CD4-positive, alpha-beta memory T cell (primary cell): ENCODE measurements at regions of chr6 and their contacts with region 1.

Region 1: GRCh38 chr6:33200219-33201146 is at the starts of genes RXRB and SLC39A7:
- DNase-seq: peak; percentile 95 to 99 (median 98)
- H3K4me3 ChIP-seq: peak within 1 kb of the TSS; percentile 99
- H3K4me3 Mint-ChIP-seq: peak within 1 kb of the TSS; percentile 98 to 100 (median 99)
- H3K27ac ChIP-seq: peak within 1 kb of the TSS; percentile 88
- H3K27ac Mint-ChIP-seq: peak within 1 kb of the TSS; percentile 96 to 99 (median 98)
- H3K4me1 ChIP-seq: peaks cover 62% of the 10 kb centered on the region
- H3K4me1 Mint-ChIP-seq: peaks cover 45 to 82% (median 64%) of the 10 kb centered on the region in 4 donors
- H3K27me3 ChIP-seq: no peaks in the 10 kb centered on the region
- H3K27me3 Mint-ChIP-seq: no peaks in the 10 kb centered on the region
- total RNA-seq, gene RXRB: 89.2 to 94.3 TPM
- total RNA-seq, gene SLC39A7: 40.8 to 40.9 TPM

Region 2: GRCh38 chr6:31901953-31902643 is 1298.4 kb before region 1 on chr6 and contains the start of gene ZBTB12:
- CTCF ChIA-PET with region 1: no interaction called
- POLR2A ChIA-PET with region 1: no interaction called
- intact Hi-C with region 1: loop called (anchors 5 kb)
- DNase-seq: peak; percentile 83 to 87 (median 86)
- H3K4me3 ChIP-seq: peak within 1 kb of the TSS; percentile 49 to 78
- H3K4me3 Mint-ChIP-seq: peak within 1 kb of the TSS; percentile 78 to 92 (median 90)
- H3K27ac ChIP-seq: peak within 1 kb of the TSS; percentile 58
- H3K27ac Mint-ChIP-seq: peak within 1 kb of the TSS; percentile 71 to 95 (median 89)
- H3K4me1 ChIP-seq: peaks cover 30% of the 10 kb centered on the region
- H3K4me1 Mint-ChIP-seq: peaks cover 17 to 36% (median 27%) of the 10 kb centered on the region in 4 donors
- H3K27me3 ChIP-seq: no peaks in the 10 kb centered on the region
- H3K27me3 Mint-ChIP-seq: peaks cover 0 to 1% of the 10 kb centered on the region in 2 donors
- total RNA-seq, gene ZBTB12: 2.4 to 2.5 TPM

Region 3: GRCh38 chr6:33118525-33119123 is 81.9 kb before region 1 on chr6:
- CTCF ChIA-PET with region 1: interaction called, 4 read pairs
- POLR2A ChIA-PET with region 1: no interaction called
- intact Hi-C with region 1: loop called (anchors 2 kb)
- DNase-seq: peak in 4 of 5 donors; percentile 65 to 72 (median 69)
- H3K4me3 ChIP-seq: no peak overlapping the region
- H3K4me3 Mint-ChIP-seq: no peak overlapping the region
- H3K27ac ChIP-seq: no peak overlapping the region
- H3K27ac Mint-ChIP-seq: peak overlapping the region in 1 of 7 donors; percentile 26
- H3K4me1 ChIP-seq: no peaks in the 10 kb centered on the region
- H3K4me1 Mint-ChIP-seq: peaks cover 0 to 13% (median 5%) of the 10 kb centered on the region in 4 donors
- H3K27me3 ChIP-seq: peaks cover 13% of the 10 kb centered on the region
- H3K27me3 Mint-ChIP-seq: peaks cover 42 to 50% of the 10 kb centered on the region in 2 donors

Region 4: DNA sequence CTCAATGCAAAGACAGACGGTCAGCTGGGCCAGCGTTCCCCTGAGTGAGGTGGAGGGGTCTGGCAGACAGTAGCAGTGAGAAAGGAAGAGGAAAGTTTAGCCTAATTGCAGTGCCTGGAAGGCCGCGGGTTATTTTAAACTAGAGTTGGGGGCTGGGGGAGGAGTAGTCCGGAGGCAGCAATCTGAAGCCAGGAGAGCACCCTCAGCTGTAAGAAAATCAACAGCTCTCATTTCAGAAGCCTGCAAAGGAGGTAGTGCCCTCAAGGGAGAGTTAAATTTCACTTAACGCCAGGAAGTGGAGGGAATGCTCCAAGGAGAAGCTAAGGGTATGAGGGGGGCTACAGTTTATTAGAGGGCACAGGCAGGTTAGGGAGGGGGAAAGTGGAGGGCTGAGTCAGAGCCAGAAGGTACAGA is 34.7 kb after region 1 on chr6:
- CTCF ChIA-PET with region 1: no interaction called
- POLR2A ChIA-PET with region 1: no interaction called
- intact Hi-C with region 1: no loop called
- DNase-seq: no peak
- H3K4me3 ChIP-seq: no peak overlapping the region
- H3K4me3 Mint-ChIP-seq: no peak overlapping the region
- H3K27ac ChIP-seq: no peak overlapping the region
- H3K27ac Mint-ChIP-seq: no peak overlapping the region
- H3K4me1 ChIP-seq: no peaks in the 10 kb centered on the region
- H3K4me1 Mint-ChIP-seq: no peaks in the 10 kb centered on the region
- H3K27me3 ChIP-seq: no peaks in the 10 kb centered on the region
- H3K27me3 Mint-ChIP-seq: peaks cover 16 to 27% of the 10 kb centered on the region in 2 donors

Region 5: DNA sequence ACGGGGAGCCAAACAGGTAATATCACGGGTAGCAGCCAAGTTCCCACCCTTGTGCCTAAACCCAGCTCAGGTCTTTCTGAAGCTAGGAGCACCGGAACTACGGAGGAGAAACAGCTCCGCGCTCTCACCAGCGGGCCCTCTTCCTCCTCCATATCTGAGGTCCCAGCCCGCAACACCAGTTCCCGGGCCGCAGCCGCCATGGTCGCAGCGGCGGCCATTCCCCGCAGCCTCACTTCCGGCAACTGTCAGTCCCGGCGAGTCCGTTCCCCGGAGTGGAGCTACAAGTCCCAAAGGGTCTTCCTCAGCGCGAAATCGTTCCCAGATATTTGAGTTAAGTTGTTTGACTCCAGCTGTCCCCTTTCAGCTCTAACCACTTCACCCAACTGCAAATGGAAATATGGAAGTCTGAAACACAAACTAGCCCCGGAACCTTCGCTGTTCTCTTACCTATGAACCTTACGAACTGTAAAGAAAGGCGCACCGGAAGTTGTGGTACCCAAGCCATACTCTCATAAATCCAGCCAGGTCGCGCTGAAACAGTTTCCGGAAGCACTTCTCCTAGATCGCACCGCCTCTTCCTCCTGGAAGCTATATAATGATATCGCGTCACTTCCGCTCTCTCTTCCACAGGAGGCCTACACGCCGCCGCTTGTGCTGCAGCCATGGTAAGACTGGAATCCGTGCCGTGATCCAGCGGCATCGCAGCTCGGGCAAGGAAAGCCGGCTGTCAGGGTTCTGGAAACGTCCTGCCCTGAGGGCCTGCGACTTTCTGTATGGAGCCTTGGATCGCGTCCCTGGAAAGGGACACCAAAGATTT is 71.2 kb after region 1 on chr6 and contains the starts of genes RPS18 and VPS52:
- CTCF ChIA-PET with region 1: no interaction called
- POLR2A ChIA-PET with region 1: interaction called, 8 read pairs
- intact Hi-C with region 1: loop called (anchors 1 kb)
- DNase-seq: peak; percentile 95 to 98 (median 96)
- H3K4me3 ChIP-seq: peak within 1 kb of the TSS; percentile 75 to 90
- H3K4me3 Mint-ChIP-seq: peak within 1 kb of the TSS; percentile 96 to 100 (median 98)
- H3K27ac ChIP-seq: peak within 1 kb of the TSS; percentile 85
- H3K27ac Mint-ChIP-seq: peak within 1 kb of the TSS; percentile 97 to 100 (median 99)
- H3K4me1 ChIP-seq: peaks cover 62% of the 10 kb centered on the region
- H3K4me1 Mint-ChIP-seq: peaks cover 43 to 78% (median 61%) of the 10 kb centered on the region in 4 donors
- H3K27me3 ChIP-seq: no peaks in the 10 kb centered on the region
- H3K27me3 Mint-ChIP-seq: no peaks in the 10 kb centered on the region
- total RNA-seq, gene RPS18: 3,264 to 3,439 TPM
- total RNA-seq, gene VPS52: 89.4 to 95.7 TPM

Region 6: GRCh38 chr6:33323623-33323948 is 123.1 kb after region 1 on chr6:
- CTCF ChIA-PET with region 1: no interaction called
- POLR2A ChIA-PET with region 1: no interaction called
- intact Hi-C with region 1: loop called (anchors 1 kb)
- DNase-seq: no peak
- H3K4me3 ChIP-seq: peak overlapping the region; percentile 53 to 68
- H3K4me3 Mint-ChIP-seq: peak overlapping the region; percentile 94 to 100 (median 98)
- H3K27ac ChIP-seq: peak overlapping the region; percentile 88
- H3K27ac Mint-ChIP-seq: peak overlapping the region; percentile 89 to 100 (median 96)
- H3K4me1 ChIP-seq: peaks cover 47% of the 10 kb centered on the region
- H3K4me1 Mint-ChIP-seq: peaks cover 32 to 59% (median 46%) of the 10 kb centered on the region in 4 donors
- H3K27me3 ChIP-seq: no peaks in the 10 kb centered on the region
- H3K27me3 Mint-ChIP-seq: no peaks in the 10 kb centered on the region

Region 7: GRCh38 chr6:33579828-33580714 is 379.6 kb after region 1 on chr6 and contains the start of gene BAK1:
- CTCF ChIA-PET with region 1: no interaction called
- POLR2A ChIA-PET with region 1: interaction called, 3 read pairs
- intact Hi-C with region 1: loop called (anchors 10 kb)
- DNase-seq: peak; percentile 78 to 89 (median 79)
- H3K4me3 ChIP-seq: peak within 1 kb of the TSS; percentile 88 to 98
- H3K4me3 Mint-ChIP-seq: peak within 1 kb of the TSS; percentile 93 to 100 (median 98)
- H3K27ac ChIP-seq: peak within 1 kb of the TSS; percentile 90
- H3K27ac Mint-ChIP-seq: peak within 1 kb of the TSS; percentile 98 to 100 (median 99)
- H3K4me1 ChIP-seq: peaks cover 31% of the 10 kb centered on the region
- H3K4me1 Mint-ChIP-seq: peaks cover 14 to 58% (median 32%) of the 10 kb centered on the region in 4 donors
- H3K27me3 ChIP-seq: no peaks in the 10 kb centered on the region
- H3K27me3 Mint-ChIP-seq: no peaks in the 10 kb centered on the region
- total RNA-seq, gene BAK1: 26.2 to 27.2 TPM